SK-N-SH (cell line): ENCODE measurements at regions of chr2 and their contacts with region 1.

Region 1: GRCh38 chr2:132651115-132652045 is 18.6 kb downstream of the LYPD1 start:
- DNase-seq: peak; percentile 69
- H3K4me3 ChIP-seq: no peak overlapping the region
- H3K27ac ChIP-seq: no peak overlapping the region
- H3K4me1 ChIP-seq: no peaks in the 10 kb centered on the region; a peak in 1 of 4 replicates
- H3K27me3 ChIP-seq: no peaks in the 10 kb centered on the region
- CTCF ChIP-seq: peak; percentile 81
- EP300 ChIP-seq: no peak
- RAD21 ChIP-seq: peak; percentile 70

Region 2: DNA sequence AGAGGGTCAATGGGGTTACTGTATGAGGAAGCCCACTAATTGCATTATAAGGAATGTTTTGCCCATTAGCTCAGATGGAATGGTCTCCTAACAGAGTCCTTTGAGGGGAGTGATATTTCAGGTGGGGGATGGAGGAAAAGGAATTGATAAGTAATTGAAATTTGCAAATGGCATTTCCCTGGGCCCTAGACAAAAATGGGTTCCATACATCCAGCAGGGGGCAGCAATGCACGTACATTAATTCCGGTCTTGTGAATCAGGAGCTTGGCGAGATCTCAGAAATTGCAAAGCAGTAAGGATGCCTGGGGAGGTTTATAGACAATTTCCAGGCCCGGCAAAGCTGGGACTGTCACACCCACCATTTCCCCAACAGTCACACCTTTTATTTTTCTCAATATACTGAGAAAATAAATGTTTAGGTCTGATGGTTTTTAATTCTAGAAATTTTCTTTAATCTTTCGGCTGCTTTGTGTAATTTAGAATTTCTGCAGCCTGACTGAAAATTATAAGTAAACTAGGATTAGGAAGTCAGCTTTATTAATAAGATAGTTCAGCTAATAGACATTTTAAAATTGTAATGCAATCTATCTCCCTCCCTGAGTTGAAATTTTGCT is 104.2 kb before region 1 on chr2:
- CTCF ChIA-PET with region 1: interaction called, 15 read pairs
- POLR2A ChIA-PET with region 1: no interaction called
- DNase-seq: peak; percentile 64
- H3K4me3 ChIP-seq: peak overlapping the region in 1 of 2 experiments; percentile 6; a peak in 1 of 4 replicates
- H3K27ac ChIP-seq: no peak overlapping the region
- H3K4me1 ChIP-seq: peaks cover 0 to 7% of the 10 kb centered on the region in 2 experiments; a peak in 2 of 4 replicates
- H3K27me3 ChIP-seq: no peaks in the 10 kb centered on the region
- CTCF ChIP-seq: peak; percentile 79
- EP300 ChIP-seq: no peak
- RAD21 ChIP-seq: peak; percentile 87

Region 3: DNA sequence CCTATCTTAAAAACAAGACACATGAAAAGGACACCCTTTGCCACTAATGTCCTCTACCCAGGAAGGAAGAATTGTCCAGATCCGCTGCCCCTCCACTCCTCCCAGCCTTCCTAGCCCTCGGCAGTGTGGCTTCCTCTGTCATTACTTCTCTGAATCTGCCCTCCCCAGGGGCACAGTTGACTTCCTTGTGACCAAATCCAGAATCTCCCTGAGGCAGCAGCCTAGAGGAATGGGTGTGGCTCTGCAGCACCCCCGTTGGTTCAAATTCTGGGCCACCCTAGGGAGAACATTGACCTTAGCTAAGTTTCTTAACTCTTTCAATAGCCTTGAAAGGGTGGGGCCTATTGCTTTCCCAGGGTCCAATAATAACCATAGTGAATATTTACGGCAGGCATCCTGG is 80.8 kb before region 1 on chr2:
- CTCF ChIA-PET with region 1: no interaction called
- POLR2A ChIA-PET with region 1: no interaction called
- DNase-seq: no peak
- H3K4me3 ChIP-seq: no peak overlapping the region
- H3K27ac ChIP-seq: no peak overlapping the region
- H3K4me1 ChIP-seq: no peaks in the 10 kb centered on the region
- H3K27me3 ChIP-seq: no peaks in the 10 kb centered on the region
- CTCF ChIP-seq: no peak
- EP300 ChIP-seq: no peak
- RAD21 ChIP-seq: no peak

Region 4: DNA sequence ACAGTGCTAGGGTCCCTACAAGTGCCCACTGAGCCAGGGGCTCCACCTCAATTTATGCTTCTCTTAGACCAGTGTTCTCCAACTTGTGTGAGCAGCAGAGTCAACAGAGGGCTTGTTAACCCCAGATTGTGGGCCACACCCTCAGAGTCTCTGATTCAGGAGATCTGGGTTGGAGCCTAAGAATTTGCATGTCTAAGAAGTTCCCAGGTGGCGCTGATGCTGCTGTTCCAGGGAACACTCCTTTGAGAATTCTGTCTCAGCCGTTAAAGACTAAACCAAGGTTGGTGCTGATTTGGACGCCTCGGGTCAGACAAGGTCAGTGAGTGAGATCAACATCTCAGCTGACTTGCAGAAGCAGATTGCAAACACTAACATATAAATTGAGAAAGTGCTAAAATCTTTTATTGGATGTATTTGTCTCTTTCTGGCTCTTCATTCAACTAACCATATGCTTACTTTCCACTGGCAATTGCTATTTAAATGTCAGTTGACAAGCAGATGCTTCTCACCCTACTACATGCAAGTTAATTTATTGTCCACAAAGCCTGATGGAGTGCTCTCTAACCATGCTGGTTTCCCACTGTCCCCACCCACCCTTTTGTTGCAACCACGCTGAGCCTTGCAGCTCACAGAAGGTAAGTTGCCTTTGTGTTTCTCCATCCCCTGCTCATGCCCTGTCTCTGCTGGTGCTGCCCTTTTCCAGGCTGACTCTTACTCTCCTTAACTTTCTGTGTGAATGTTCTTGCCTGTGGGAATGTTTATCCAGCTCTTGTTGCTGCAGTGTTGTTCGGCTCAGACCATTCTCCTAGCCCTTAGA is 12.9 kb before region 1 on chr2:
- CTCF ChIA-PET with region 1: interaction called, 14 read pairs
- POLR2A ChIA-PET with region 1: no interaction called
- DNase-seq: no peak
- H3K4me3 ChIP-seq: no peak overlapping the region
- H3K27ac ChIP-seq: no peak overlapping the region
- H3K4me1 ChIP-seq: no peaks in the 10 kb centered on the region
- H3K27me3 ChIP-seq: no peaks in the 10 kb centered on the region
- CTCF ChIP-seq: no peak
- EP300 ChIP-seq: no peak
- RAD21 ChIP-seq: no peak

Region 5: DNA sequence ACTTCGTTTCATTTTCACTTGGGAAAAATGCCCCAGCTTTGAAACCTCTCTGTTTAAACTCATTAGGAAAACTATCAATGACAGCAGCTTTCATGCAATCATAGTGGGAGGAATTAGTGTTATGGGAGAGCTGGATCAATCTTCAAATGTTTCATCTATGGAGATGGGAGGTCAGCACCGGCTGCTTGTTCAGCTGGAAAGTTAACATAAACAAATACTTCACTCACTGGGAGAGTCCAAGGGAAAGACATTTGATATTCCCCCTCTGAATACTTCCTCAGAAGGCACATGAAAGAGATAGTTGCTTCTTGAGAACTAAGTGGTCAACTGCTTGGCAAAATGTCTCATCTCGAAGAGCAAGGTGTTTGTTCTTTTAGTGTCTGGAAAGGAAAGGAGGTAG is 11.4 kb after region 1 on chr2:
- CTCF ChIA-PET with region 1: interaction called, 21 read pairs
- POLR2A ChIA-PET with region 1: no interaction called
- DNase-seq: no peak
- H3K4me3 ChIP-seq: no peak overlapping the region
- H3K27ac ChIP-seq: no peak overlapping the region; a peak in 1 of 4 replicates
- H3K4me1 ChIP-seq: no peaks in the 10 kb centered on the region
- H3K27me3 ChIP-seq: no peaks in the 10 kb centered on the region
- CTCF ChIP-seq: no peak
- EP300 ChIP-seq: no peak
- RAD21 ChIP-seq: no peak

Region 6: GRCh38 chr2:133146895-133147294 is 495.5 kb after region 1 on chr2:
- CTCF ChIA-PET with region 1: interaction called, 11 read pairs
- POLR2A ChIA-PET with region 1: no interaction called
- DNase-seq: no peak
- H3K4me3 ChIP-seq: no peak overlapping the region
- H3K27ac ChIP-seq: no peak overlapping the region
- H3K4me1 ChIP-seq: no peaks in the 10 kb centered on the region; a peak in 1 of 4 replicates
- H3K27me3 ChIP-seq: no peaks in the 10 kb centered on the region
- CTCF ChIP-seq: peak; percentile 23; the same call in 1 of the 2 replicates
- EP300 ChIP-seq: no peak
- RAD21 ChIP-seq: peak; percentile 56